Prostate gland (tissue), 2 donors: ENCODE measurements at regions of chr14 and their contacts with region 1.

Region 1: GRCh38 chr14:95442633-95443021 is 73.8 kb downstream of the SYNE3 start:
- DNase-seq: peak; percentile 71
- H3K4me3 ChIP-seq: no peak overlapping the region
- H3K27ac ChIP-seq: no peak overlapping the region
- H3K4me1 ChIP-seq: peaks cover 5% of the 10 kb centered on the region
- H3K27me3 ChIP-seq: no peaks in the 10 kb centered on the region
- CTCF ChIP-seq: peak; percentile 37 to 79 (median 74)
- POLR2A ChIP-seq: no peak

Region 2: DNA sequence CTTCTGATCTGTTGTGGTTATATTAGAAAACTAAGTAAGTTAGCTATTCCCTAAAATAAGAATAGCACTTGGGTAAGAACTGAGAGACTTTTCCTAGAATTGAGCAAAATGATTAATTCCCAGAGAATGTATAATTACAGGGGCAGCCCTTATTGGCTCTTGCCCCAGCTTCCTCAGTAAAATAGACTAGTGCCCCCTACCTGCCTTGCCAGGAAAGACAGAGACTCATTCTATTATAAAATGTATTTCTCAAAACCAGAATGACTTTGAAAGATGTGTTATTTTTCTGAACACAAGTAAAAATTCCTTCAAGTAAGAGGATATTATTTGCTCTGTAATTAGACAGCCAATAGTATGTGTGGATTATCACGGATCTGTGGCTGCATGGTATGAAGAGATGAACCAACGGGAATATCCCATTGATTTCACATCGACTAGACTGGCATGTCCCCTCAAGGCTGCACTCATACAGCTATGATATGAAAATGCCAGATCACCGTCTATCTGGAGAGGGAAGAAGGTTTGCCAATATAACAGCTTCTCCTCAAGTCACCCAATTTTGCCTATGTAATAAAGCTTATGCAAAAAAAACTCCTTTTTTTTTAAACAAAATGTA is 84.9 kb after region 1 on chr14:
- intact Hi-C with region 1: loop called (anchors 2 kb)
- DNase-seq: no peak
- H3K4me3 ChIP-seq: no peak overlapping the region
- H3K27ac ChIP-seq: no peak overlapping the region
- H3K4me1 ChIP-seq: peaks cover 7% of the 10 kb centered on the region
- H3K27me3 ChIP-seq: no peaks in the 10 kb centered on the region
- CTCF ChIP-seq: peak; percentile 42 to 76 (median 68)
- POLR2A ChIP-seq: no peak